ENCODE measurements at regions of chr5 and their contacts with region 1.

Region 1: DNA sequence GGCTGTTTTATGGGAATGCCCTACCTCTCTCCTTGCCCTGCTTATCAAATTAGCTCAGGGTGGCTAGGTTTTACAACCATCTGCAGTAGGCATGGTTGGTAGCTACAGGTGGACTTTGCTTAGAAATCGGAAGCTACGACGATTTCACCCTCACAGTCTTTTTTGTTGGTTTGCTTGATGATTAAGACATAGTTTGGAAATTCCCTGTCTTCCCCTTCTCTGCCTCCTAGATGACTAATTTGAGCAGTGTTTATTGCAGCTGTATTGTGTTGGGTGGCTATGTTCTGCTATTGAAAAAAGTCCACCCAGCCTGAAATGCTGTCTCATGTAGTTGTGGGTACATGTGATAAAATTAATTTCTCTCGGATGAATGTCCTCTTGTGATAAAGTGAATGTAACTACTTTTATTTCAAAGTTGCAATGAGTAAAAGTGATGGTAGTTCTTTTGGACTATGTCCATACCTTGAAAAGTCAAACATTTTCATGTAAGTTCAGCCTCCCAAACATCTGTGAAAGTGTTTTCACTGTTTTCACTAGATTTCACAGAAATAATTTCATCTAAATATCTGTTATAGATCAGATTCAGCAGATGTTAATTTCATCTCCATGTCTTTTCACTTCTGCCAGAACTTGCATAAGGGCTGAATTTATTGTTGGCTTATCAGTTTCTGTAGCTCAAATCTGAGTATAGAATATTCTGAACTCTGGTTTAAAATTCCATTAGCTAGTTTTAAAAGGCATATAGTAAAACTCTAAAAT is 37.3 kb upstream of the FYB1 start:
- DNase-seq: no peak
- ATAC-seq: peak; percentile 74
- H3K4me3 ChIP-seq: no peak overlapping the region
- H3K4me3 Mint-ChIP-seq: peak overlapping the region in 7 of 10 donors; percentile 1 to 69 (median 58)
- H3K27ac ChIP-seq: no peak overlapping the region
- H3K27ac Mint-ChIP-seq: peak overlapping the region in 1 of 9 donors; percentile 48
- H3K4me1 ChIP-seq: peaks cover 0 to 13% of the 10 kb centered on the region in 2 donors
- H3K4me1 Mint-ChIP-seq: peaks cover 0 to 19% (median 17%) of the 10 kb centered on the region in 7 donors
- H3K27me3 ChIP-seq: no peaks in the 10 kb centered on the region
- H3K27me3 Mint-ChIP-seq: no peaks in the 10 kb centered on the region

Region 2: GRCh38 chr5:38830521-38831051 is 426.1 kb before region 1 on chr5:
- CTCF ChIA-PET with region 1: no interaction called
- POLR2A ChIA-PET with region 1: no interaction called
- intact Hi-C with region 1: no loop called
- DNase-seq: no peak
- ATAC-seq: no peak
- H3K4me3 ChIP-seq: no peak overlapping the region
- H3K4me3 Mint-ChIP-seq: no peak overlapping the region
- H3K27ac ChIP-seq: no peak overlapping the region
- H3K27ac Mint-ChIP-seq: no peak overlapping the region
- H3K4me1 ChIP-seq: no peaks in the 10 kb centered on the region
- H3K4me1 Mint-ChIP-seq: peaks cover 0 to 19% (median 0%) of the 10 kb centered on the region in 7 donors
- H3K27me3 ChIP-seq: no peaks in the 10 kb centered on the region
- H3K27me3 Mint-ChIP-seq: peaks cover 12 to 48% (median 33%) of the 10 kb centered on the region in 5 donors

Region 3: DNA sequence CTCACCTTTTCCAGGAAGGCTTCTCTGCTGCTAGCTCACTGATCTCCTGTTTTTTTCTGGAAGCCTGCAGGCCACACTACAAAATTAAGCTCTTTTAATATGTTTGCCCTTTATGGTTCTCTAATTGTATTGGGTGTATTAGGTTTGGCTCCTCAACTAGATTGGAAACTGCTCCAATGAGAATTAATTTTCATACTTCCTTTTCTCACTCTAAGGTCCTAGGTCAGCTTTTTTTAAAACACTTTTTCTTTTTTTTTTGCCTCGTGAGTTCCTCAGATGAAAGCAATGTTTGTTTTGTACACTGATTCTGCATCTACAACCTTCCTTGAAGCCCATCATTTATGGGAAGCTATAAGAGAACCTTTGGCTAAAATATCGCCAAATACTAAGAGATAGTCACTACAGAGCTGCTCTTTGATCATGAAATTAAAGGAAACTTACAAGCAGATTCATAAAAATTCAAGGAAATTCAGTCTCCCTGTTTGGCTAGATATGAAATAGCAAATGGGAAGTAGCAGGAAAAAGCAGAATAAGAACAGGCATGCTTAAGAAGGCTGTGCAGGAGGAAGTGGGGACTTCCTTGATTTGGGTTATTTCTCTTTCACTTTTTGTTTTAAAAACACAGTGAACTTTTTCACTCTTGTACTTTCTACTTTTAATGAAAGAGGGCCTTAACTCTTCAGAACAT is 17.9 kb after region 1 on chr5:
- CTCF ChIA-PET with region 1: no interaction called
- POLR2A ChIA-PET with region 1: interaction called, 3 read pairs
- intact Hi-C with region 1: loop called (anchors 2 kb)
- DNase-seq: peak in 7 of 9 donors; percentile 29 to 52 (median 46)
- ATAC-seq: peak; percentile 68
- H3K4me3 ChIP-seq: peak overlapping the region; percentile 59
- H3K4me3 Mint-ChIP-seq: peak overlapping the region; percentile 63 to 88 (median 85)
- H3K27ac ChIP-seq: peak overlapping the region; percentile 74
- H3K27ac Mint-ChIP-seq: peak overlapping the region; percentile 92 to 98 (median 96)
- H3K4me1 ChIP-seq: peaks cover 34 to 49% of the 10 kb centered on the region in 2 donors
- H3K4me1 Mint-ChIP-seq: peaks cover 25 to 67% (median 47%) of the 10 kb centered on the region in 7 donors
- H3K27me3 ChIP-seq: no peaks in the 10 kb centered on the region
- H3K27me3 Mint-ChIP-seq: no peaks in the 10 kb centered on the region